ENCODE measurements at regions of chr3 and their contacts with region 1.

Region 1: GRCh38 chr3:57500506-57500905 is 43.6 kb downstream of the DNAH12 start:
- DNase-seq: no peak
- H3K4me3 ChIP-seq: no peak overlapping the region
- H3K27ac ChIP-seq: no peak overlapping the region
- H3K27me3 ChIP-seq: no peaks in the 10 kb centered on the region
- CTCF ChIP-seq: no peak

Region 2: DNA sequence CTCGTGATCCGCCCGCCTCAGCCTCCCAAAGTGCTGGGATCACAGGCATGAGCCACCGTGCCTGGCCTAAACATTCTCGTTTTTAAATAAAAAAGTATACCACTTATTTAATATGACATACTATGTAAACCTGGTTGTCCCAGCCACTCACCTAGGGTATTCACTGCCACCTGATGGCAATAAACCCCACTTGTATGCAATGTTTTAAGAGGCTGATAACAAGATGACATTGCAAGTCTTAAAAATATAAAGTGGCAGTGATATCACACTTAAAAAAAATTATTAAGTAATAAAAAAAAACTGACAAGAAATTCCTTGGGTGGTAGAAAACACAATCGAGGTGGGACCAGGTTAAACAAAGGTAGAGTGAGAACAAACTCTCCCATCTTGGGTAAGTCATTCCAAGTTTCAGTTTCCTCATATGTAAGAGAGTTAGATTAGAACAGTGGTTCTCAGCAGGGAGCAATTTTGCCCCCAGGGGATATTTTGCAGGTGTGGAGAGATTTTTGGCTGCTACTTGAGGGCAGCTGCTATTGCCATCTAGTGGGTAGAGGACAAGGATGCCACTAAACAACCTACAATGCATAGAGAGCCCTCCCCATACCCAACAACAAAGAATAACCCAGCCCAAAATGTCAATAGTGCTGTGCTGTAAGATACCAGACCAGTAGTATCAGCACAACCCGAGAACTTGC is 82.1 kb after region 1 on chr3:
- CTCF ChIA-PET with region 1: no interaction called
- POLR2A ChIA-PET with region 1: interaction called, 12 read pairs
- DNase-seq: no peak
- H3K4me3 ChIP-seq: no peak overlapping the region
- H3K27ac ChIP-seq: no peak overlapping the region
- H3K27me3 ChIP-seq: no peaks in the 10 kb centered on the region
- CTCF ChIP-seq: 0 out of 2 replicates have a peak, but pooled peaks have one; percentile 5

Region 3: DNA sequence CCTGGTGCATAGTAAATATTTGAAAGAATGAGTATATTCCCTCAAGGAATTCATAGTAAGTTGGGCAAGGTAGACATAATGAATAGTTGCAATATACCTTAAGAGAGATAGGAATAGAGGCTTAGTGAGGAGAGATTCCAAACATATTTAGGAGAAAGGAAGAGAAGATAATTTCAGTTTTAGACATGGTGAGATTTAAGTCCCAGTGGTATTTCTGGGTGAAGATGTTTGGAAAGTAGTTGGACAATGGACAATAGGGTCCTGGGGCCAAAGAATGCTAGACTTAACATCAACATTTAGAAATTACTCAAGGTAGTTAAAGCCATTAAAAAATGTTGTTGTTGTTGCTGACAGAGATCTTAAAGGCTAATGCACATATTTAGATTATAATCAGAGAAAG is 382.6 kb after region 1 on chr3:
- CTCF ChIA-PET with region 1: no interaction called
- POLR2A ChIA-PET with region 1: no interaction called
- DNase-seq: no peak
- H3K4me3 ChIP-seq: no peak overlapping the region
- H3K27ac ChIP-seq: no peak overlapping the region
- H3K27me3 ChIP-seq: no peaks in the 10 kb centered on the region
- CTCF ChIP-seq: no peak

Measured in AG04450 (cell line).